GM10248 (cell line): ENCODE measurements at regions of chr6 and their contacts with region 1.

Region 1: DNA sequence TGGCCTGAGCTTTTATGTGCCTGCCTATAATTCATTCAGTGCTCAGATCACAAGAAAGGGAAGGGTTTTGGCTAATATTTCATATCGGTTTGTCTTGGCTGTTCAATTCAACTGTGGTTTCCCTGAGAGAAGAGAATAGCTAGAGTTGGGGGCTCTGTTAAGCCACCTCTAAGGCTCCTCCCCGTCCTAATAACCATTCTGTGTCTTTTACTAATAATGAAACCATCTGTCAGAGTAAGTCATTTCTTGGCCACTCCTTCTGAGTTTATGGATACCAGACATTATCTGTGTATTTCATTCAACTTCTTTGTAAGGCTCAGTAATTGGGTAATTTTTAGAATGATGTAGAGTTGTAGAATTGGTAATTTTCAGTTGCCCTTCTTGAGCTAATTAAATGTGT is 5.2 kb downstream of the STX11 start:
- DNase-seq: peak; percentile 68
- CTCF ChIP-seq: no peak

Region 2: DNA sequence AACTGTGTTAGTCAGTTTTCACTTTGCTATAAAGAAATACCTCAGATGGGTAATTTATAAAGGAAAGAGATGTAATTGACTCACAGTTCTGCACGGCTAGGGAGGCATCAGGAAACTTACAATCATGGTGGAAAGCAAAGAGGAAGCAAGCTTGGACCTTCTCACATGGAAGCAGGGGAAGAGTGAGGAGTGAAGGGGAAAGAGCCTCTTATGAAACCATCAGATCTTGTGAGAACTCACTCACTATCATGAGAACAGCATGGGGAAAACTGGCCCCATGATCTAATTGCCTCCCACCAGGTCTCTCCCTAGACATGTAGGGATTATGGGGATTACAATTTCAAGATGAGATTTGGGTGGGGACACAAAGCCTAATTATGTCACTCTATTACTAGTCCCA is 106.1 kb before region 1 on chr6:
- CTCF ChIA-PET with region 1: no interaction called
- POLR2A ChIA-PET with region 1: no interaction called
- DNase-seq: no peak
- CTCF ChIP-seq: no peak

Region 3: GRCh38 chr6:144165784-144166183 is 10.3 kb after region 1 on chr6:
- CTCF ChIA-PET with region 1: interaction called, 19 read pairs
- POLR2A ChIA-PET with region 1: interaction called, 3 read pairs
- DNase-seq: no peak
- CTCF ChIP-seq: no peak